ENCODE measurements at regions of chr1 and their contacts with region 1.

Region 1: GRCh38 chr1:181142096-181142958 is 53.8 kb downstream of the IER5 start:
- DNase-seq: peak; percentile 87 to 93
- ATAC-seq: peak; percentile 96 to 99 (median 96)
- H3K4me3 ChIP-seq: no peak overlapping the region
- H3K4me3 Mint-ChIP-seq: no peak overlapping the region
- H3K27ac ChIP-seq: no peak overlapping the region
- H3K27ac Mint-ChIP-seq: peak overlapping the region; percentile 11 to 71
- H3K4me1 ChIP-seq: peaks cover 23% of the 10 kb centered on the region
- H3K4me1 Mint-ChIP-seq: peaks cover 33 to 40% of the 10 kb centered on the region in 2 donors
- H3K27me3 ChIP-seq: no peaks in the 10 kb centered on the region
- H3K27me3 Mint-ChIP-seq: peaks cover 8 to 23% of the 10 kb centered on the region in 2 donors
- CTCF ChIP-seq: peak; percentile 92

Region 2: DNA sequence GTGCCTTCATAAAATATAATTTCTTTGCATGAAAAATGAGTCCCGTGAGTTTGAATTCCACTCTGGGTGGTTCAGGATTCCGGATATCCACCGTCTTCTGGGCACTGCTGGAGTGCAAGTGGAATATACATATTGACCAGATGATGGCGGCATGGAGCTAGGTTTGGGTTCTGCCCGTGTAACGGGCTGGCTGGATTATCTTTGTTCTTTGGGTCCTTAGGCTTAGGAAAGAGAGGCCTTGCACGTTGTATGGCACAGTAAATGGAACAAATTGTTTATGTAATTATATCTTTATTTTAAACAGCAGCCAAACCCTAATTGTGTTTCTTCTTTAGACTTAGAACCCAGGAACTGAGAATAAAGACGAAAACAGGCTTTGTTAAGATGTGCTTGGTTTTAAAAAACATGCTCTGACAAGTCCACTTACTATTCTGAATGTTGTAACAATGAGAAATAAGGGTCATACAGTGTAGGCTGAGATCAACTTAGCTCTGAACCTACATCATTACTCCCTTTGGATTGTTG is 626.4 kb before region 1 on chr1:
- intact Hi-C with region 1: loop called (anchors 2 kb)
- DNase-seq: peak; percentile 23 to 83
- ATAC-seq: peak; percentile 88 to 98 (median 91)
- H3K4me3 ChIP-seq: no peak overlapping the region
- H3K4me3 Mint-ChIP-seq: no peak overlapping the region
- H3K27ac ChIP-seq: no peak overlapping the region
- H3K27ac Mint-ChIP-seq: no peak overlapping the region
- H3K4me1 ChIP-seq: no peaks in the 10 kb centered on the region
- H3K4me1 Mint-ChIP-seq: no peaks in the 10 kb centered on the region
- H3K27me3 ChIP-seq: no peaks in the 10 kb centered on the region
- H3K27me3 Mint-ChIP-seq: peaks cover 14 to 19% of the 10 kb centered on the region in 2 donors
- CTCF ChIP-seq: peak; percentile 87

Region 3: GRCh38 chr1:180881806-180882509 is 260.4 kb before region 1 on chr1:
- intact Hi-C with region 1: loop called (anchors 1 kb)
- DNase-seq: peak in 1 of 2 donors; percentile 28
- ATAC-seq: peak in 1 of 3 donors; percentile 34
- H3K4me3 ChIP-seq: no peak overlapping the region
- H3K4me3 Mint-ChIP-seq: no peak overlapping the region
- H3K27ac ChIP-seq: no peak overlapping the region
- H3K27ac Mint-ChIP-seq: peak overlapping the region in 1 of 2 donors; percentile 1
- H3K4me1 ChIP-seq: no peaks in the 10 kb centered on the region
- H3K4me1 Mint-ChIP-seq: no peaks in the 10 kb centered on the region
- H3K27me3 ChIP-seq: no peaks in the 10 kb centered on the region
- H3K27me3 Mint-ChIP-seq: no peaks in the 10 kb centered on the region
- CTCF ChIP-seq: peak; percentile 14

Region 4: GRCh38 chr1:180893614-180894013 is 248.7 kb before region 1 on chr1:
- intact Hi-C with region 1: no loop called
- DNase-seq: no peak
- ATAC-seq: no peak
- H3K4me3 ChIP-seq: no peak overlapping the region
- H3K4me3 Mint-ChIP-seq: no peak overlapping the region
- H3K27ac ChIP-seq: no peak overlapping the region
- H3K27ac Mint-ChIP-seq: no peak overlapping the region
- H3K4me1 ChIP-seq: no peaks in the 10 kb centered on the region
- H3K4me1 Mint-ChIP-seq: peaks cover 0 to 4% of the 10 kb centered on the region in 2 donors
- H3K27me3 ChIP-seq: no peaks in the 10 kb centered on the region
- H3K27me3 Mint-ChIP-seq: peaks cover 0 to 2% of the 10 kb centered on the region in 2 donors
- CTCF ChIP-seq: no peak

Region 5: GRCh38 chr1:180954005-180954800 is 188.1 kb before region 1 on chr1:
- intact Hi-C with region 1: loop called (anchors 10 kb)
- DNase-seq: peak; percentile 58 to 85
- ATAC-seq: peak; percentile 84 to 93 (median 89)
- H3K4me3 ChIP-seq: peak overlapping the region; percentile 39
- H3K4me3 Mint-ChIP-seq: peak overlapping the region; percentile 70
- H3K27ac ChIP-seq: no peak overlapping the region
- H3K27ac Mint-ChIP-seq: peak overlapping the region in 1 of 2 donors; percentile 49
- H3K4me1 ChIP-seq: peaks cover 15% of the 10 kb centered on the region
- H3K4me1 Mint-ChIP-seq: peaks cover 5 to 11% of the 10 kb centered on the region in 2 donors
- H3K27me3 ChIP-seq: no peaks in the 10 kb centered on the region
- H3K27me3 Mint-ChIP-seq: no peaks in the 10 kb centered on the region
- CTCF ChIP-seq: no peak

Region 6: GRCh38 chr1:181033799-181034451 is 108.4 kb before region 1 on chr1 and contains the start of gene MR1:
- intact Hi-C with region 1: loop called (anchors 1 kb)
- DNase-seq: peak in 1 of 2 donors; percentile 91
- ATAC-seq: peak; percentile 95 to 98 (median 97)
- H3K4me3 ChIP-seq: peak within 1 kb of the TSS; percentile 85
- H3K4me3 Mint-ChIP-seq: peak within 1 kb of the TSS; percentile 98
- H3K27ac ChIP-seq: peak within 1 kb of the TSS; percentile 96
- H3K27ac Mint-ChIP-seq: peak within 1 kb of the TSS; percentile 98 to 100
- H3K4me1 ChIP-seq: peaks cover 29% of the 10 kb centered on the region
- H3K4me1 Mint-ChIP-seq: peaks cover 60 to 66% of the 10 kb centered on the region in 2 donors
- H3K27me3 ChIP-seq: no peaks in the 10 kb centered on the region
- H3K27me3 Mint-ChIP-seq: no peaks in the 10 kb centered on the region
- CTCF ChIP-seq: no peak
- total RNA-seq, gene MR1: 27.8 to 35.3 (median 34.6) TPM

Region 7: GRCh38 chr1:181062836-181063428 is 79.4 kb before region 1 on chr1:
- intact Hi-C with region 1: no loop called
- DNase-seq: peak; percentile 37 to 58
- ATAC-seq: peak; percentile 91 to 93 (median 92)
- H3K4me3 ChIP-seq: peak overlapping the region; percentile 35
- H3K4me3 Mint-ChIP-seq: peak overlapping the region; percentile 87
- H3K27ac ChIP-seq: peak overlapping the region; percentile 92
- H3K27ac Mint-ChIP-seq: peak overlapping the region; percentile 91 to 98
- H3K4me1 ChIP-seq: peaks cover 17% of the 10 kb centered on the region
- H3K4me1 Mint-ChIP-seq: peaks cover 24 to 25% of the 10 kb centered on the region in 2 donors
- H3K27me3 ChIP-seq: no peaks in the 10 kb centered on the region
- H3K27me3 Mint-ChIP-seq: no peaks in the 10 kb centered on the region
- CTCF ChIP-seq: no peak

Region 8: DNA sequence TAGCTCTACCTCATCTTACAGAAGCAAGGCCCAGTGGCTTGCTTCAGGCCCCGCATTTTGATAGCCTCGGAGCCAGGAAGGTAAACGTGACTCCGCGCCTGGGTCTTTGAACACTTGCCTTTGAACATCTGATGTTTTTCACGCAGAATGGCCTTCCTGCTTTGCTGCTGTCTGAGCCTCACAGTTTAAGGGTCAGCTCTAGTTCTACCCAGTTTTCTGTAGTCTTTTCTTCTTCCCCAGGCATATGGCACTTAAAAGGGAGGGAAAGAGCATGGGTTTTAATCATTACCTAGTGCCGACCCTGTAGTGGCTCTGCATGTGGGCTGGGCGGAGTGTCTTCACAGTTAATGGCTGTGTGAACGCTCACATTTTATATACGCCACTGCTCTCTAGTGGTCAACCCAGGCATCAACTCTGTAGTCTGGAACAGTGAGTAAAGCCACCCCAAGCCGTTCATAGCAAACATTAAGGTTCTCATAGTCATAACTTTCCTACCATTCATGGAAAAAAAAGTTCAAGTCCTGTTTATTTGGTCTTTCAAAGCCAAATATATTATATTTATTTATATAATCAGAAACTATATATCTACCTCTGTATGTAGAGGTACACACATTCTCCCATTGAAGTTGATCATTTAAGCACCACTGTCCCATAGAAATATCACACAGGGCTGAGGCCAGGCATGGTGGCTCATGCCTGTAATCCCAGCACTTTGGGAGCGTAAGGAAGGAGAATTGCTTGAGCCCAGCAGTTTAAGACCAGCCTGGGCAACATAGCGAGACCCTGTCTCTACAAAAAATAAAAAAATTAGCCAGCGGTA is 24.3 kb after region 1 on chr1:
- intact Hi-C with region 1: loop called (anchors 2 kb)
- DNase-seq: peak; percentile 57 to 89
- ATAC-seq: peak; percentile 94 to 100 (median 99)
- H3K4me3 ChIP-seq: no peak overlapping the region
- H3K4me3 Mint-ChIP-seq: no peak overlapping the region
- H3K27ac ChIP-seq: no peak overlapping the region
- H3K27ac Mint-ChIP-seq: no peak overlapping the region
- H3K4me1 ChIP-seq: peaks cover 6% of the 10 kb centered on the region
- H3K4me1 Mint-ChIP-seq: peaks cover 6 to 7% of the 10 kb centered on the region in 2 donors
- H3K27me3 ChIP-seq: no peaks in the 10 kb centered on the region
- H3K27me3 Mint-ChIP-seq: no peaks in the 10 kb centered on the region
- CTCF ChIP-seq: peak; percentile 82